MCF 10A (cell line): ENCODE measurements at regions of chr5 and their contacts with region 1.

Region 1: DNA sequence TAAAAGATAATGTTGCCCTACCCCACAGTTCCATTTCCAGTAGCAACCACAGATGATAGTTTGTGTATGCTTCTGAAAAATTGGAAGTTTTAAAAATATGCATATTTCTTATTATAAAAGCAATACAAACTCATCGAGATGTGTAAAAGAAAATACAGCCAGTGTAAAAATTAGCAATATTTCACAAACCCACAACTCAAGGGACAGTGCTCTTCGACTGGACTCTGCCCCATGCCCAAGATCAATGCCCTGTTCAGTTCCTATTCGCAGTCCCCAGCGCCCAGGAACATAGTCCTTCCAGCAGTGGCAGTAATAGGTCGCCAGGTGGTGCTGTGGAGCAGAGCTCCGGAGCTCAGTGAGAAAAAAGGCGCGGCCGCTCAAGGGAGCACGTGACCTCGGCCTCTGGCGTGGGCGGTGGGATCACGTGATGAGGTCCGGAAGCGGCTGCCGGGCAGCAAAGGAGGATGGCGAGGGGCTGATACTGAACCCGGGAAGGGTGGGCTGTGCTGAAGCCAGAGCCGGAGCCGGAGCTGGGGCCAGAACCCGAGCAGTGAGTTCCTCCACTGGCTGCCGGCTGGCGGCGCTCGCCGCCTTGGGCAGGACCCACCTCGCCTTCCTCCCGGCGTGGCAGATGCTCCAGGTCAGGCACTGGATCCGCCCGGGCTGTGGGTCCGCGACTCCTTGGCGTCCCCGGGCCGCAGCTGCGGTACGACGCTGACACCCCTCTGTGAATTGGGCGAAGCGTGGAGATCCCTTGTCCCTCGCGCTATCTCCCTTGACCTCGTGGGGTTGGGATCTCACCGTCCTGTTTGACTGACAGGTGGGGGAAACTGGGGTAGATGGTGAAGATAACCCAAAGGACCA is at the start of gene SLC36A1:
- DNase-seq: peak; percentile 97
- H3K4me3 Mint-ChIP-seq: peak within 1 kb of the TSS; percentile 77
- H3K27ac Mint-ChIP-seq: peak within 1 kb of the TSS; percentile 66
- H3K4me1 Mint-ChIP-seq: peaks cover 19% of the 10 kb centered on the region
- H3K27me3 Mint-ChIP-seq: peaks cover 28% of the 10 kb centered on the region
- CTCF ChIP-seq: peak; percentile 97
- total RNA-seq, gene SLC36A1: 10.4 and 16.2 TPM in 2 replicates

Region 2: GRCh38 chr5:151338734-151339133 is 108.7 kb before region 1 on chr5:
- CTCF ChIA-PET with region 1: no interaction called
- POLR2A ChIA-PET with region 1: no interaction called
- intact Hi-C with region 1: no loop called
- DNase-seq: no peak
- H3K4me3 Mint-ChIP-seq: no peak overlapping the region
- H3K27ac Mint-ChIP-seq: no peak overlapping the region
- H3K4me1 Mint-ChIP-seq: no peaks in the 10 kb centered on the region
- H3K27me3 Mint-ChIP-seq: peaks cover 48% of the 10 kb centered on the region
- CTCF ChIP-seq: no peak

Region 3: GRCh38 chr5:151427258-151427657 is 20.1 kb before region 1 on chr5:
- CTCF ChIA-PET with region 1: interaction called, 10 read pairs
- POLR2A ChIA-PET with region 1: interaction called, 5 read pairs
- intact Hi-C with region 1: no loop called
- DNase-seq: no peak
- H3K4me3 Mint-ChIP-seq: no peak overlapping the region
- H3K27ac Mint-ChIP-seq: no peak overlapping the region
- H3K4me1 Mint-ChIP-seq: no peaks in the 10 kb centered on the region
- H3K27me3 Mint-ChIP-seq: peaks cover 24% of the 10 kb centered on the region
- CTCF ChIP-seq: no peak

Region 4: DNA sequence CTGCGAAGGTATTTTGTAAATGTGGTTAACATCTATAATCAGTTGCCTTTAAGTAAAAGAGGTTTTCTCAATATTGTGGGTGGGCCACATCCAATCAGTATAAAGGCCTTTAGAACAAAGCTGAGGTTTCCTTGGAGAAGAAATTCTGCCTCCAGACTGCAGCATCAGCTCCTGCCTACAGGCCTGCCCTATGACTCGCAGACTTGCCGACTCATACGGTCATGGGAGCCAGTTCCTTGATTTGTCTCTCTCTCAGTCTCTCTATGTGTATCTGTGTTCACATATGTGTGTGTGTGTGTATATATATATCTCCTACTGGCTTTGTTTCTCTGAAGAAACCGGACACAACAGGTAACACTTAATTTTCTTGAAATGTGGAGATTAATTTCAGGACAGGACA is 45.3 kb after region 1 on chr5:
- CTCF ChIA-PET with region 1: interaction called, 15 read pairs
- POLR2A ChIA-PET with region 1: no interaction called
- intact Hi-C with region 1: no loop called
- DNase-seq: peak; percentile 22
- H3K4me3 Mint-ChIP-seq: no peak overlapping the region
- H3K27ac Mint-ChIP-seq: no peak overlapping the region
- H3K4me1 Mint-ChIP-seq: no peaks in the 10 kb centered on the region
- H3K27me3 Mint-ChIP-seq: no peaks in the 10 kb centered on the region
- CTCF ChIP-seq: no peak

Region 5: GRCh38 chr5:151509231-151509630 is 61.8 kb after region 1 on chr5:
- CTCF ChIA-PET with region 1: interaction called, 15 read pairs
- POLR2A ChIA-PET with region 1: interaction called, 4 read pairs
- intact Hi-C with region 1: no loop called
- DNase-seq: peak; percentile 32
- H3K4me3 Mint-ChIP-seq: no peak overlapping the region
- H3K27ac Mint-ChIP-seq: no peak overlapping the region
- H3K4me1 Mint-ChIP-seq: no peaks in the 10 kb centered on the region
- H3K27me3 Mint-ChIP-seq: no peaks in the 10 kb centered on the region
- CTCF ChIP-seq: no peak

Region 6: GRCh38 chr5:151637676-151638075 is 190.3 kb after region 1 on chr5:
- CTCF ChIA-PET with region 1: interaction called, 10 read pairs
- POLR2A ChIA-PET with region 1: no interaction called
- intact Hi-C with region 1: no loop called
- DNase-seq: peak; percentile 66
- H3K4me3 Mint-ChIP-seq: no peak overlapping the region
- H3K27ac Mint-ChIP-seq: peak overlapping the region; percentile 14
- H3K4me1 Mint-ChIP-seq: peaks cover 34% of the 10 kb centered on the region
- H3K27me3 Mint-ChIP-seq: no peaks in the 10 kb centered on the region
- CTCF ChIP-seq: no peak